ENCODE measurements at regions of chr4 and their contacts with region 1.

Region 1: DNA sequence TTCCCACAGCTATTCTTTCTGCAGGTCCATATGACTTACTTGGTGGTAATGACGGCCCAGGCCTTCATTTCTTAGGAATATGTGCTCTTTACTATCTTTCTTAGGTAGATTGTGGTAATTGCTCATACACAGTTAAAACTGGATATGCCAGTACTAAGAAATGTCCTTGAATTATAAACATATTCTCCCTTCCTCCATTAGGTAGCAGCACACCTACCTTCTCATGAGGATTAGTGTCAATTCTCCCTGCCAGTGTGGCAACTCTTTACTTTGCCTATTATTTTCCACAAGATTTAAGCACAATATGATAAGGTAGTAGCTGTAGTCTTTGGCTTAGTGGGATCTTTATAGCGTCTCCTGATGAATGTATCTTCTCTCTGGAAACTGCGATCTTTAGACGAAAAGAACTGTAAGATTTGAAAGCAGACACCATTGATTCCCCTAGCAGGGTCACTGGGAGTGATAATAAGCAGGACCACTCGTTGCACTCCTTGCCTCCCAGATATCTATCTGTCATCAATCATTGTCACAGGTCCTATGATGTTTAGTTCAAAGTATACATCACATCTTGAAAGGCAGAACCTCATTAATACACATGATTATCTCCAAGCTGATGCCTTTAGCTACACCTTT is 1240.7 kb downstream of the C4orf33 start:
- DNase-seq: peak; percentile 7
- H3K4me3 Mint-ChIP-seq: no peak overlapping the region
- H3K27ac Mint-ChIP-seq: no peak overlapping the region
- H3K4me1 Mint-ChIP-seq: no peaks in the 10 kb centered on the region
- H3K27me3 Mint-ChIP-seq: no peaks in the 10 kb centered on the region
- CTCF ChIP-seq: peak; percentile 41

Region 2: GRCh38 chr4:130306566-130306965 is 30.1 kb before region 1 on chr4:
- CTCF ChIA-PET with region 1: no interaction called
- intact Hi-C with region 1: loop called (anchors 1 kb)
- DNase-seq: no peak
- H3K4me3 Mint-ChIP-seq: no peak overlapping the region
- H3K27ac Mint-ChIP-seq: no peak overlapping the region
- H3K4me1 Mint-ChIP-seq: no peaks in the 10 kb centered on the region
- H3K27me3 Mint-ChIP-seq: no peaks in the 10 kb centered on the region
- CTCF ChIP-seq: no peak